Ascending aorta (tissue), 2 donors: ENCODE measurements at regions of chr19 and their contacts with region 1.

Region 1: DNA sequence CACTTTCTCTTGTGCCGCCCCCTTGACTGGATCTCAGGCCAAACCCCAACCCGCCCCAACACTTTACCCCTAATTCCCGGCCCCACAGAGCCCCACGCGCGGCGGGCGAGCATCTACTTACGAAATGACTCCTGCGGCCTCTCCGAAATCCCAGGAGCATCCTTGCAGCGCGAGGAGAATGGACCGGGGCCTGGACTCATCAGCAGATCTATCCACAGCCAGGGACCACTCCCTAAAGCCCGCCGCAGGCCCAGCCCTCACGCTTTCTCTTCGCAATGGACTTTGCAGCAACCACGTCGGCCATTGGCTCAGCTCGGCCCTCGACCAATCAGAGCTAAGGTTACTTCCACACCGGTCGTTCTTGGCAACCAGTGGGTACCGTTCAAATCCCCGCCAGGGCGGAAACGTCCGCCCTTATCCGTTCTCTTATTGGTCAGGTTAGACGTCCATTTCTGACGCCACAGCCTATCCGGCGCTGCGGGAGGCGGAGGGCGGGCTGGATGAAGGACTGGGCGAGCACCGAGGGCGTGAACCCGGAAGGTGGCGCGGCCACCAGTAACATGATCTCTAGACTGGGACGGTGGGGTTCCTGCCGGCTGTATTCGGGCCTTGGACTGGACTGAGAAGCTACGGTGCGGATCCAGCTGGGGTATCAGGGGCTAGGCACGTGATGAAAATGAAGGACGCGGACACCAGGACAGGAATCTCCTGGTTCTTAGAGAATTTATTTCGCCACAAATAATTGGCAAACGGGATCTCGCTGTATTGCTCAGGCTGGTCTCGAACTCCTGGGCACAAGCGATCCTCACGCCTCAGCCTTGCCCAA is at the starts of genes CEP89 and FAAP24:
- DNase-seq: peak; percentile 96 to 99
- H3K4me3 ChIP-seq: peak within 1 kb of the TSS; percentile 70 to 83
- H3K27ac ChIP-seq: peak within 1 kb of the TSS; percentile 63 to 74
- H3K4me1 ChIP-seq: peaks cover 0 to 9% of the 10 kb centered on the region in 2 donors
- H3K27me3 ChIP-seq: no peaks in the 10 kb centered on the region
- CTCF ChIP-seq: no peak
- total RNA-seq, gene CEP89: 7.1 TPM
- total RNA-seq, gene FAAP24: not detected

Region 2: DNA sequence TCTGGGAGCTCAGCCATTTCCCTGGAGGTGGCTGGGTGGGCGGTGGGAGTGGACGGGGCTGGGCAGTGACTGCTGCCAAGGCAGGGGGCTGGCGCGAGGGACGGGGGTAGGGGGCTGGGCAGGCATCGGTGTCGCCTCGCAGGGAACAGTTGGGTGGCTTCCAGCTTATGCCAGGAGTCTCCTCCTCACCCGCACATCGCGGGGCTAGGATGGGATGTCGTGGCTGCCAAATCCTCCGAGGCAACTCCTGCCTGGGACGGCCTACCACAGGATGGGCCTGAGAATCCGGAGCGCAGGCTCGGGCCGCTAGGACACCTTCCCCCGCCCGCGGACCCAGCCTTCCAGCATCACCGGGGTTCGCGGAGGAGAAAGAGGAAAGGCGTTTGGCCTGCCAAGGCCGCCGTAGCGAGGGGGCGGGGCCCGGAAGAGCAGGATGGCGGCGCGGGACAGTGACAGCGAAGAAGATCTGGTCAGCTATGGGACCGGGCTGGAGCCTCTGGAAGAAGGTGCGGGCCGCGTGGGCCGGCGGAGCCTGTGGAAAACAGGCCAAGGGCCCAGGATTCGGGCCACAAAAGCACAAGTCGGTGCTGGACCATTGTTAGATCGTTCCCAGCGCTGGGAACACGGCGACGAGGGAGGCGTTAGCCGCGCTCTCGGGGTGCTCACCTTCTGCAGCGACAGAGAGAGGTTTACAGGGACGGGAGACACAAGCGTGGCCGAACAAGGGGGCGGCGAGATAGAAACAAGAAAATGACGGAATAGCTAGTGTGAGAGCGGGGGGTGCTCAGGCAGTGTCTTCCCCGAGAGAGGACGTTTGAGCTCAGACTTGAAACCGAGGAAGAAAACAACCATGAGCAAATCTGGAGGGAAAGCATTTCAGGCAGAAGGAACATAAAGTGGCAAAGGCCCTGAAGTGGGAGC is 109.1 kb after region 1 on chr19 and contains the start of gene GPATCH1:
- intact Hi-C with region 1: loop called (anchors 2 kb)
- DNase-seq: peak; percentile 41 to 93
- H3K4me3 ChIP-seq: peak within 1 kb of the TSS; percentile 87 to 96
- H3K27ac ChIP-seq: peak within 1 kb of the TSS; percentile 70 to 71
- H3K4me1 ChIP-seq: peaks cover 3 to 8% of the 10 kb centered on the region in 2 donors
- H3K27me3 ChIP-seq: no peaks in the 10 kb centered on the region
- CTCF ChIP-seq: no peak
- total RNA-seq, gene GPATCH1: 4.4 TPM

Region 3: DNA sequence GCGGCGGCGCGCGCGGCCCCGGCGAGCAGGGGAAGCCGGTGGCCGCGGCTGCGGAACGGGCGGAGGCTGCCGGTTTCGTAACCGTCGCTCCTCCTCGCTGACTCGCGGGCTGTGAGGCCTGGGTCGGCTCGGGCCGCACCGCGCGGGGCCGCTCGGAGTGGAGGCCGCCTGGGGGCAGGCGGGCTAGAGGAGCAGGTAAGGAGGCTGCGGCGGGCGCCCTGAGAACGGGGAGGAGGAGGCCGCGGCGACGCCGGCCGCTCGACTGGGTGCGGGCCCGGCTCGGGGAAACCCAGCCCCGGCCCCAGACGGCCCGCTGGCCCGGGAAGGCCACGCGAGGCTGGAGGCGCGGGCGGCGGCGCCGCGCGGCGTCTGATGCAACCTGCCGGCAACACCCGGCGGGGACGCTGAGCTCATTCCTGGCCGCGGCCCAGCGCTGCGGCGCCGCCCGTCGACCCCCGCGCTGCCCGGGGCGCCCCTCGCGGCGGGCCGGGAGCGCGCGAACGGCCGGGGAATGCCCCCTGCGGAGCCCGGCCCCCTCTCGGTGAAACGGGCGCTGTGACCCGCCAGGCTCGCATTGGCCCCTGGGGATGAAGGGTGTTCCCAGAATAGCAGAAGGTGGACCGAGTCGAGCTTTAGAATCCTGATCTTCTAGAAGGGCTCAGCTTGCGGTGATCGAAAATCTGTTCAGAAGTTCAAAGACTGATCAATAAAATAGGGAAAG is 401.9 kb after region 1 on chr19 and contains the start of gene CEBPG:
- intact Hi-C with region 1: loop called (anchors 10 kb)
- DNase-seq: no peak
- H3K4me3 ChIP-seq: peak within 1 kb of the TSS; percentile 87
- H3K27ac ChIP-seq: peak within 1 kb of the TSS; percentile 96 to 97
- H3K4me1 ChIP-seq: peaks cover 0 to 19% of the 10 kb centered on the region in 2 donors
- H3K27me3 ChIP-seq: no peaks in the 10 kb centered on the region
- CTCF ChIP-seq: peak in 1 of 3 experiments; percentile 28
- total RNA-seq, gene CEBPG: 21.9 TPM

Region 4: DNA sequence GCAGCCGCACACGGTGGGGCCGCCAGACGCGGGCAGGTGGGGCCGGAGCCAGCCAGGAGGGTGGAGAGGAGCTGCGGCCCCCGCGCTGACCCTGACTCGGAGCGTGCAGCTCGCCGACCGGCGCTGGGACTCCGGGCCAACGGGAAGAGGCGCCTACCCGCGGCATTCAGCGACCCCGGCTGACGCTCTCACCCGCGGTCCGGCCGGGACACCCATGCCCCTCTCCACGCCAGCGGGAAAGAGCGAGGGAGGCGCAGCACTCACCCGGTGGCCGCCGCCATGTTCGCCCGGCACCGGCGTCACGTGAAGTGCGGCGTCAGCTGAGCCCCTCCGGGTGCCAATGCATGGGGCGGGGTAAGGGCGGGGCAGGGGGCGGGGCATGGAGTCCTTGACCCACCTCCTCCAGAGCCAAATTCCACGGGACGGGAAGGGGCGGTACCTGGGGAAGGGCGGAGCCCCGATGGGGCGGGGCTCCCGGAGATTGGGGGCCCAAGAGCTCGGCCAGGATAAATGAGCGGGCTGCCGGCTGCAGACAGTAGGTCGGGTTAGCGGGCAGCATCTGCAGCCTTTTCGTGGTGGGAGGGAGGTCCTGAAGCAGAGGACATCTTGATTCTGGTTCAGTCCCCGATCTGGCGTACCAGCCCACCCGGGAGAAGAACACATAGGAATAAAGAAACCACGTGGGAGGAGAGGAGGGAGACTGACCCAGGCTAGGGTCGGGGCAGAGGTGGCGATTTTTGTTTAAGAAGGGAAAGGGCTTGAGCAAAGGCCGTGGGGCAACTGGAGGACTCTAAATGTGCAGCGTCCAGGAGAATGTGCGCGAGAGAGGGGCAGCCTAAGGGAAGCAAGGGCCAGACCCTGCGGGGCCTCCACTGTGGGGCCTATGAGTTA is 549.8 kb after region 1 on chr19 and contains the start of gene PEPD:
- intact Hi-C with region 1: loop called (anchors 5 kb)
- DNase-seq: peak; percentile 60 to 95
- H3K4me3 ChIP-seq: peak within 1 kb of the TSS; percentile 60 to 89
- H3K27ac ChIP-seq: peak within 1 kb of the TSS in 1 of 2 donors; percentile 4
- H3K4me1 ChIP-seq: peaks cover 4 to 7% of the 10 kb centered on the region in 2 donors
- H3K27me3 ChIP-seq: no peaks in the 10 kb centered on the region
- CTCF ChIP-seq: no peak
- total RNA-seq, gene PEPD: 112 TPM